ENCODE measurements at regions of chr9 and their contacts with region 1.

Region 1: DNA sequence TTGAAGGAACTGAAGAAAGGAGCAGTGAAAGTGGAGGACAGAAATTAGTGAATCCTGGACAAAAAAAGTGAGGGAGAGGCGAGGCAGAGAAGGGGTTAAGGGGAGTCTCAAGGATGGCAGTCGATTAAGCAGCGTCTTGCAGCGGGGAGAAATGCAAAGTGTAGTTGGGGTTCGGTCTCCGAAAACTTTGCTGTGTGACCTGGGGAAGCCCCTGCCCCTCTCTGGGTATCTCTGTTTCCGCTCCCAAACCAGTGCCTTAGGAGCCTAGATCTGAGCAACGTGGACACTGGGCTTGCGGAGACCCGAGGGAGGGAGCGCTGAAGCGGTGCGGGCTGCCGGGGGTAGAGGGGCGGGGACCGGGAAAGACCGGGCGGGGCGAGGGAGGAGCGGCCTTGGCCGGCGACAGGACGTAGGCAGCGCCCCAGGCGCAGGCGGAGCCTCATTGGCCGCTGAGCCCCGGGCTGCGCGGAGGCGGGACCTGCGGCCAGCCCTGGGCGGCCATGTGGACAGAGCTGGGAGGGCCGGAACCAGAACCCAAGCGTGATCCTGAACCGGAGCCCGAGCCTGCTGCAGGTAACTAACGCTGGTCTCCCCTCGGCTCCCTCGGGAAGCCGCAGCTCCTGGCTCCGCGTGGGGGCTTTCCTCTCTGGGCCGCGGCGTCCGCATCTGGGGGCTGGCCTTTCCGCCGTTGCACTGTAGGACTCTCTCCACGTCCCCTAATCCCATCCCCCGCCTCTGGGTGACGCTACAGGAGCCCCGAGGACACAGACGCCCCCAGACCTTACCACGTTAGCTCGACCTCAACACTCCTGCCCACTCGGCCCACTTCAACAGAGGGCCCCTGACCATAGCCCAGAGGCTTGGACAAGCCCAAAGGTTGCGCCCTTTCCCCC is at the start of gene ALDH1B1:
- DNase-seq: peak; percentile 43 to 75
- H3K4me3 ChIP-seq: peak within 1 kb of the TSS; percentile 69 to 74 (median 71)
- H3K27ac ChIP-seq: peak within 1 kb of the TSS; percentile 44 to 46
- H3K4me1 ChIP-seq: peaks cover 0 to 4% of the 10 kb centered on the region in 2 donors
- H3K27me3 ChIP-seq: no peaks in the 10 kb centered on the region
- CTCF ChIP-seq: no peak
- POLR2A ChIP-seq: no peak
- total RNA-seq, gene ALDH1B1: 10.2 to 18.4 (median 11.0) TPM

Region 2: DNA sequence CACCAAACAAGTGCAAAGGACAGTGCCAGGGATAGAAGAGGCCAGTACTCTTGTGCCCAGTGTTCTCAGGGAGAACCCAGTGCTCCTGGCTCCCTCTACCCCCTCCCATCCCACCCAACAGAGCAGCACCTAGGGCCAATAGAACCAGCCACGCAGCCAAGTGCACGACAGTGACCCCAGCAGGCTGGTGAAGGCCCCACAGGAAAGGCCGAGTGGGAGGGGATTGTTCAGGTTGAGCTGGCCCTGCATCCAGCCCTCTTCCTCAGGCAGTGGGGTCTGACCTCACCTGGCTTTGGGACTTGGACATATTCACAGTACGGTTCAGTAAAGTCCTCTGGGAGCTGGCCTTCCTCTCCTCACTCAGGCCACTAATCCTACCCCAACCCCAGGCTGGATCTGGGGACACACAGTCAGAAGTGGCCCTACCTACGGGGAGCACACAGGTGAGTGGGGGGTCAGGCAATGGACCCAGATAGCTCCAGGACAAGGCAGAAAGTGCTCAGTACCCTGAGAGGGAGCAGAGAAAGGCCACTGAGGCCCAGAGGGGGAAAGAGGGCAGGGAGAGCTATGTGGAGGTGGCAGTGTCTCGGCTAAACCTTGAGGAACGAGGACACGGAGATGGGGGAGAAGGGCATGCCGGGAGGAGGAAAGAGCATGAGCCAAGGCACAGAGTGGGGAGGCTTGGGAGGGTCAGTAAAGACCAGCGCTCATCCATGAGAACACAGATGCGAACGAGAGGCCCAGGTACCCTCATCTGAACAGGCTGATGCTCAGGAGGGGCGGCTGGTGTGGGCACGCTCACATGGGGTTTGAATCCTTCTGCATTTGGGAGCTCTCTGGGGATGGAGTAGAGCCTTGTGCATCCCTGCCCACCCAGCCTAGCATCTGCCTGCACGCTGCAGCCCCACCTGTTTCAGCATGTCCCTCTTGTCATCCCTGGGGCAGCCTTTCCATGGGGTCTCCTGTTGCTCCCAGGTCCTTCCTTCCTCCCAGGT is 881.2 kb before region 1 on chr9:
- intact Hi-C with region 1: loop called (anchors 5 kb)
- DNase-seq: no peak
- H3K4me3 ChIP-seq: no peak overlapping the region
- H3K27ac ChIP-seq: no peak overlapping the region
- H3K4me1 ChIP-seq: no peaks in the 10 kb centered on the region
- H3K27me3 ChIP-seq: no peaks in the 10 kb centered on the region
- CTCF ChIP-seq: no peak
- POLR2A ChIP-seq: no peak

Region 3: DNA sequence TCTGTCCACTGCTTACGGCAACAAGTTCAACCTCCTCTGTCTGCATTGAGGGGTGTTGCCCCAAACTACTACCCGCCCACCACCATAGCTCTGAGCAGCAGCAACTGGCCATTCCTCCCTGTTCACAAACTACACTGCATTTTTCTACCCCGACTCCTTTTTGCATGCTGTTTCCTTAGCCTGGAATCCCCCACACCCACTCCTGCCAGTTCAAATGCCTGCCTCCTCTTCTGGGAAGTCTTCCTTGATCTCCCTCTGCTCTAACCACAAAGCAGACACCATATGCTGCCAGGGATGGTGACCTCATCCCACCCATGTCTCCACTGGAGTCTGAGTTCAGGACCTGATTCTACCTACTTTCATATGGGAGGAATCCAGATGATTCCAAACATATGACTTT is 13.3 kb after region 1 on chr9:
- intact Hi-C with region 1: no loop called
- DNase-seq: no peak
- H3K4me3 ChIP-seq: no peak overlapping the region
- H3K27ac ChIP-seq: no peak overlapping the region
- H3K4me1 ChIP-seq: no peaks in the 10 kb centered on the region
- H3K27me3 ChIP-seq: peaks cover 0 to 14% of the 10 kb centered on the region in 2 donors
- CTCF ChIP-seq: no peak
- POLR2A ChIP-seq: no peak

Region 4: DNA sequence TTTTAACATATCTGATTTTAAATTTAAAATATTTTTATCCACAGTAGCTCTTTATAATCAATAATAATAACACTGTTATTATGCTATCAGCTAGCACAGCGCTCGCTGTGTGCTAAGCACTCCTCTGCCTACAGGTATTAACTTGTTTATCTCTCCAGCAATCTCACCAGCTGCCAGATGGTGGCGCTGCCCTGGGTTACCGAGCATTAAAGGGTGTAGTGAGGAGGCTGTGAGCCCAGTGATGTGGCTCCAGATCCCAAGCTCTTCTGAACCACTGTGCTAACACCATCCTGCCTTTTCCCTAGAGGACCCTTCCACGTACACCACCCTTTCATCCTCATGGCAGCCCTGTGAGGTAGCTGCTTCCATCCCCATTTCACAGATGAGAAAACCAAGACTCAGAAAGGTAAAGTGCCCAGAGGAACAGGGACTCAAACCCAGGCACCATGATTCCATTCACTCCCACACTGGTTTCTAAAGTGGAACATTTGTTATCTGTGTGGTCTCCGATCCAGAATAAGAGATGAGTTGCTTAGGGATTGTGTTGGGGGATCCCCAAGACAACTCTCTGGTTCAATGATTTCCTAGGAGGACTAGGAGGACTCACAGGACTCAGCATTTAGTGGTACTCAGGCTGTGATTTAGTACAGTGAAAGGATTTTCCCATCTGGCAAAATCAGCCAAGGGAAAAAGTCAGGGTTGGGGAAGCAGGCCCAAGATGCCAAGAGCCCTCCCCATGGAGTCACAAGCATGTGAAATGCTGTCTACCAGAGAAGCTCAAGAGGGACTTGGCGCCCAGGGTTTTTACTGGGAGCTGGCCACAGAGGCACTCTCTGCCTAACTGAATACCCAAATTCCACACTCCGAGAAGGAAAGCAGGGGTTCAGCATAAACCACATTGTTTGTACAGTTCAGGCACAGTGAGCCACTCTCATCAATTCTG is 24.8 kb after region 1 on chr9:
- intact Hi-C with region 1: loop called (anchors 1 kb)
- DNase-seq: no peak
- H3K4me3 ChIP-seq: no peak overlapping the region
- H3K27ac ChIP-seq: no peak overlapping the region
- H3K4me1 ChIP-seq: no peaks in the 10 kb centered on the region
- H3K27me3 ChIP-seq: peaks cover 0 to 24% of the 10 kb centered on the region in 2 donors
- CTCF ChIP-seq: peak in 1 of 3 donors; percentile 9
- POLR2A ChIP-seq: no peak